Right ventricle myocardium inferior (tissue), 1 donor: ENCODE measurements at regions of chr12 and their contacts with region 1.

Region 1: DNA sequence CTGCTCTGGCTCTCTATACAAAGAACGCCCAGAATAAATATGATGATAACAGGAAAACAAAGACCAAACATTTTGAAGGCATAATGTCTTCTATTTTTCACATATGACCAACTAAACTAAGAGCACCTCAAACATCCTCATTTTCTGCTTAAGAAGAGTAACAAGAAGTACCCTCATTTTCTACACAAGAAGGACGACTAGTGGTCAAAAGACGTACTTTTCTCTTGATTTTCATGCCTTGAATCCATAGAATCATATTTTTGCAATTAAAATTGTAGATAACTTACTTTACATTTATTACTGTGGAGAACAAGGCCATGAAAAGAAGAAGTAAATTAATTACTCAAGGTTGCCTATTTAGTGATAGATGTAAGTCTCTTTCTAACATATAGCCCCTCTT is 358.6 kb downstream of the DUSP6 start:
- DNase-seq: no peak
- ATAC-seq: no peak

Region 2: GRCh38 chr12:88111074-88111652 is 882.5 kb before region 1 on chr12:
- intact Hi-C with region 1: loop called (anchors 5 kb)
- DNase-seq: no peak
- ATAC-seq: no peak

Region 3: GRCh38 chr12:88153959-88154358 is 839.7 kb before region 1 on chr12:
- intact Hi-C with region 1: loop called (anchors 10 kb)
- DNase-seq: no peak
- ATAC-seq: no peak

Region 4: DNA sequence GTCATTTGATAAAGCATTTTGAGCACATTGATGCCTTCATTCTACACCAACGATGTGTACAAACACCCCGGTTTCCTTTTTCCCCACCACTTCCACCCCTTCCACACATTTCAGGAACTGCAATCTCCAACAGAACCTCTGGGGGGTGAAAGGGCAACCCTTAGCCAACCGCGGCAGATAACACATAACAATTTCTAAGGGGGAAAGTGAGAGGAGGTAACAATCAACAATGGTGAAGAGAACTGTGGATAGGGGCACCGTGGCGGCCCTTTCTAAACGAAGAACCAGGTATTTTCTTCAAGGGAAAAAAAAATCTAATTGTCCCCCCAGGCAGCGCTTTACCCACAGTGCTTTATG is 414.5 kb before region 1 on chr12:
- intact Hi-C with region 1: loop called (anchors 5 kb)
- DNase-seq: no peak
- ATAC-seq: no peak

Region 5: GRCh38 chr12:88650715-88651114 is 342.9 kb before region 1 on chr12:
- intact Hi-C with region 1: loop called (anchors 10 kb)
- DNase-seq: no peak
- ATAC-seq: no peak

Region 6: DNA sequence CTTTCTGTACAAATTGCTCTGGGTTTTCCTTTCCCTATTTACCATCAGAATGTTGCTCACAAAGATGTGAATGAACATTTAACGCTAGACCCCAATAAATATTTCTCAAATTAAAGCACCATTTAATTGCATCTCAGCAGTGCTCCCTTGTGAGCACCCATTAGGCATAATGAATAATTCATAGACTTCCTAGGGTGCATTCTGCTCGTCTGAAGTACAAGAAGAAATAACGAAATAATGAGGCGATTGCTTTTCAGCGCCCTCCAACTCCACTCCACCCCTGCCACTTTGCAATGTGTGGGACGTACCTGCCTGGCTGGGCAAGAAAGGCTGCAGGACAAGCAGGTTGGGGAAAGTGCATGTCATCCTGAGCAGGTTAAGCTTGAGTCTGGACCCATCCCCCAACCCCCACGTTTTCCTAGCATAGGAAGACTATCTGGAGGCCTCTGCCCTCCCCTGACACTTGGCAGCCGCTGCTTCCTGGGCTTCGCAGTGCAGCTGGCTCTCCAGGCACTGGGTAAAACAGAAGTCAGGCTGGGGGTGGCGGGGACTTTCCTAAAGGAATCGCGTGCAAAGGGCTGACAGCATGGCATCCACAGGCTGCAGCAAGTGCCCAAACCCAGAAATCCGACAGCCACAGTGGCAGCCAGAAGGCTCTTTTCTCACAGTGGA is 104.9 kb after region 1 on chr12:
- intact Hi-C with region 1: no loop called
- DNase-seq: peak; percentile 67
- ATAC-seq: peak; percentile 57